ENCODE measurements at regions of chr4 and their contacts with region 1.

Region 1: DNA sequence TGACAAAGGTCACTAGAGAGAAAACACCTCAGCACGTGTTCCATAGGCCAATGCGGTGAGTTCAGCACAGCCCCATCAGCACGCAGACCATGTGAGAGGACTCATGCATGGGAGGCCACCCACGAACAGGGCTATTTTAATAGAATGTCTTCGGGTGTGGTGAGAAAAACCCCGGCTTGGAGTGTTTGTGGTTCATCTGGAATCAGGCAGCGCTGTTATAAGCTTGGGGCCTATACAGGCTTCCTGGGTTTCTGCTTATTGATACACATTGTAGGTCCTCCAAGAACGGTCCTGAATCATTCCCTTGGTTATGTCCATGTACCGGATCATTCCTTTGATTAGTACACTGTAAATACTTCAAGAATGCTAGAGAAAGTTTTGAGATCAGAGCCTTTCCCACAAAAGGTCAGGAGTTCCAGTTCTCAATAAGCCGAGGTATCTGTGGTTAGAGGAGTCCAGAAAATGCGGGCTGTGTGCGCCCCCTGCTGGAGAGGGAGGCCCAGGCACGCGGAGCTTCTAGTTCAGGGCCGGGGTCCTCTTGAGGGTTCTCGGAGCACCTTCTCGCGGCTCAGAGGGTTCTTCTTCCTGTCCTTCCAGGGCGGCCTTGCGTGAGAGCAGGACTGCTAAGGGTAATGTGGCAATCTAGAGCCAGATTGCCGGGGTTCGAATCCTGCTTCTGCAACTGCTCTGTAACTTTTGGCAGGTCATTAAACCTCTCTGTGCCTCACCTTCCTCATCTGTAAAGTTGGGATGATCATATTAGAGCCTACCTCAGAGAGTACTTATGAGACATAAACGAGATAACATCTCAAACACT is 51.8 kb downstream of the TLR10 start:
- DNase-seq: peak; percentile 75 to 77 (median 76)
- H3K4me3 ChIP-seq: no peak overlapping the region
- H3K4me3 Mint-ChIP-seq: peak overlapping the region in 1 of 8 donors; percentile 39
- H3K27ac ChIP-seq: no peak overlapping the region
- H3K27ac Mint-ChIP-seq: peak overlapping the region in 2 of 7 donors; percentile 8 to 62
- H3K4me1 ChIP-seq: peaks cover 18% of the 10 kb centered on the region
- H3K4me1 Mint-ChIP-seq: peaks cover 12 to 29% (median 18%) of the 10 kb centered on the region in 4 donors
- H3K27me3 ChIP-seq: no peaks in the 10 kb centered on the region
- H3K27me3 Mint-ChIP-seq: peaks cover 0 to 3% of the 10 kb centered on the region in 2 donors

Region 2: GRCh38 chr4:38062088-38062893 is 668.7 kb before region 1 on chr4:
- CTCF ChIA-PET with region 1: interaction called, 71 read pairs
- POLR2A ChIA-PET with region 1: no interaction called
- intact Hi-C with region 1: loop called (anchors 1 kb)
- DNase-seq: peak; percentile 38 to 51 (median 49)
- H3K4me3 ChIP-seq: peak overlapping the region in 1 of 2 donors; percentile 42
- H3K4me3 Mint-ChIP-seq: peak overlapping the region; percentile 73 to 94 (median 87)
- H3K27ac ChIP-seq: no peak overlapping the region
- H3K27ac Mint-ChIP-seq: peak overlapping the region; percentile 20 to 91 (median 72)
- H3K4me1 ChIP-seq: peaks cover 4% of the 10 kb centered on the region
- H3K4me1 Mint-ChIP-seq: peaks cover 7 to 16% (median 8%) of the 10 kb centered on the region in 4 donors
- H3K27me3 ChIP-seq: no peaks in the 10 kb centered on the region
- H3K27me3 Mint-ChIP-seq: no peaks in the 10 kb centered on the region

Region 3: DNA sequence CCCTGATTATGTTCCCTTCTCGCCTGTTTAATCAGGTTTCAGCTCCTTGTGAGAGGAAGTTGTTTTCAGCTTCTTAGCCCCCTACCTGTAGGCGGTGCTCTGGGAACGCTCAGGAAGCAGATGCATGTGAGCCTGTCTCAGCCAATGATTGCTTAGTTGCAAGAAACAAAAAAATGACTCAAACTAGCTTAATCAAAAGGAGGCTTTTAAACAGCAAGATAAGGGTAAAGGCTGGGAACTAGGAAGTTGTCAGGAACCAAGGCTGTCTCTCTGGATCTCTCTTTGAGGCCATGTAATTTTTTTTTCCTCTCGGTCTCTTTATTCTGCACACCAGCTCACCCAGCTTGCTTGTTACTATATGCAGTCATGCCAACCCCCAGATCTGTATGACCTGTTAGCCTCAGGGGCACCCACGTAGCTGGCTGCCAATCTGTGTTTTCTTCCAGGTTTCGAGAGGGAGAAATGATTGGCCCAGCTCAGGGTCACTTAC is 661.7 kb before region 1 on chr4:
- CTCF ChIA-PET with region 1: interaction called, 71 read pairs
- POLR2A ChIA-PET with region 1: no interaction called
- intact Hi-C with region 1: no loop called
- DNase-seq: peak in 4 of 5 donors; percentile 4 to 52 (median 19)
- H3K4me3 ChIP-seq: no peak overlapping the region
- H3K4me3 Mint-ChIP-seq: no peak overlapping the region
- H3K27ac ChIP-seq: no peak overlapping the region
- H3K27ac Mint-ChIP-seq: peak overlapping the region in 1 of 7 donors; percentile 14
- H3K4me1 ChIP-seq: no peaks in the 10 kb centered on the region
- H3K4me1 Mint-ChIP-seq: peaks cover 2 to 9% (median 4%) of the 10 kb centered on the region in 4 donors
- H3K27me3 ChIP-seq: no peaks in the 10 kb centered on the region
- H3K27me3 Mint-ChIP-seq: no peaks in the 10 kb centered on the region

Measured in CD4-positive, alpha-beta memory T cell (primary cell).